HEK293 (cell line): ENCODE measurements at regions of chr6 and their contacts with region 1.

Region 1: DNA sequence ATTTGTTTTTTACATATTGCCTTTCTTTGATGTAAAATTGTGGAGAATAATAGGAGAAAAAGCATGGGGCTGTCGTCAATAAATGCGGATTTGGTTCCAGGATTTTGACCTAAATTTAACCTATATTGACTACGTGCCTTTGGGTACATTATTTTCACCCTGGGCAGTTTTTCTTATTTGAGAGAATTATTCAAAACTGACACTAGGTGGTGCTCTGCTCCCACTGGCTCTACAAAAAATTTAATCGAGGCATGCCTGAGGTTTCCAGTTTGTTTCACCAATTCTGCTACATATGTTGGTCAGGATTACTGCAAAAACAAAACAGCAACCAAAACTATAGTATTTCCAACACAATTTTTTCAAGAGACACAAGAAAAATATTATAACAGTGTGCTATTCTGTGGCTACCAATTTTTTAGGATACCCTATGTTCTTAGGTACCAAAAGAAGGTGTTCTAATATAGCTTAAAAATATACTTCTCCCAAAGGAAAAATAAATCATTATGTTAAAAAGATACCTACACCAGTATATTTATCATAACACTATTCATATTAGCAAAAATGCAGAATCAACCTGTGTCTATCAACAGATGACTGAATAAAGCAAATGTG is 48.6 kb upstream of the FABP7 start:
- H3K4me3 ChIP-seq: no peak overlapping the region
- H3K27ac ChIP-seq: no peak overlapping the region
- H3K4me1 ChIP-seq: no peaks in the 10 kb centered on the region
- CTCF ChIP-seq: peak; percentile 44; the same call in 1 of the 2 replicates

Region 2: DNA sequence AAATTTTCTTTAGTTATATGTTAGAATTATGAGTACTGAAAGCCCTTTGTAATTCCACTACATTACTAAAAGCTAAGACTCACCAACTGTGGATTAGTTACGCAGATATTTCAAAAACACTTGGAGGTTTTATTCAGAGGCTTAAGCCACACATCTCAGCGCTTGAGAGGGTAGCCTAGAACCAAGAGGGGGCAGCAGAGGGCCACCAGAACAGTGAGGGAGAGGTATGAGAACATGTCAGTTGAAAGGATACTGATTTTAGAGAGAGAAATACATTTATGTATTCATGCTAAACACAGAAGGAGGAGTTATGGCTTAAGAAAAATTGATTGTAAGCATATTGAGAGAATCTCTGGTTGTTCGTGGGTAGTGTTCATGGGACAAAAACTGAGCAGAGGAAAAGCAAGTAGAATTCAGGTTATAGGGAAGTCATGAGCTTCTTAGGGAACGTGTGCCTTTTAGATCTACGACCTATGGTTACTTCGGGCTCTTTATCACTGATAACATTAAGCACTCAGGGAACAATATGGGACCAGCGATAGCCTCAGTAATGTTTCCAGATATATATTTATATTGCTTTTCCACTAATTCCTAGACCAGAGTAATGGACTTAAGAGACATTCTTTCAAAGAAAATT is 238.8 kb before region 1 on chr6:
- CTCF ChIA-PET with region 1: interaction called, 136 read pairs
- POLR2A ChIA-PET with region 1: no interaction called
- H3K4me3 ChIP-seq: no peak overlapping the region
- H3K27ac ChIP-seq: no peak overlapping the region
- H3K4me1 ChIP-seq: no peaks in the 10 kb centered on the region
- CTCF ChIP-seq: peak; percentile 53

Region 3: DNA sequence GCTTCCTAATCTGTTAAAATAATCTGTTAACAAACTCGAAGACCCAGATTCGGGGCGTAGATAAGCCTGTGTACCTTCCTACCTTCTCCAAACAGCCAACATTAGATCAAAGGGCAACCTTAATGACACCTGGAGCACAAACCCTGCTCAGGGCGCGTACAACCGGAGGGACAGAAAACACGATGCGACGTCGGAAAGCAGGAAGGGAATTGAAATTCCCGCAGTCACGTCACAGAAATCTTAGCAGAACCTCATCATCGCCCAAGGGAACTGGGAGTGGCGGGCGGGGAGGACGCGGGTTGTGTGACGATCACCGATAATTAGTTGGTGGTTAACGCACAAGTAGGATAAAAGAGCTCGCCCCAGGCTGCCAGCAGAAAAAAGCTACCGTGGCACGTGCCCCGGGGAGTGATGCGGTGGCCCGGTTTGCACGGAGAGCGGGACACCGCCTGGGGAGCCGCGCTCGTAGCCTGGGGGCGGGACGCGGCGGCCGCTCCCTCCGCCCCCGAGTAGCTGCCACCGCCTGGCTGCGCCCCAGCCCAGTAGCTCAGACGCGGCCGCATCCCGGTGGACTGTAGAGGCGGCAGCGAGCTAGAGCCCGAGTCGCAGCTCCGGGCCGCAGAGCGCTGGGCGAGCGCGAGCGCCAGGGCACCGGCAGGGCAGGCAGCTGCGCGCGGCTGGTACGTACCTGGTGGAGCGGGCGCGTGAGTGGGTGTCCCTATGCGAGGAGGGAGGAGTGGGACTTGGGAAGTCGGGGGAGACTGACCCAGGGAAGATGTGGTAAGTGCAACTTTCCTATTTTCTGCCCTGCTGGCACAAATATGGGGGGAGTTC is 120.8 kb before region 1 on chr6 and contains the start of gene PKIB:
- CTCF ChIA-PET with region 1: interaction called, 16 read pairs
- POLR2A ChIA-PET with region 1: no interaction called
- H3K4me3 ChIP-seq: peak within 1 kb of the TSS; percentile 77
- H3K27ac ChIP-seq: peak within 1 kb of the TSS; percentile 57; the same call in 1 of the 2 replicates
- H3K4me1 ChIP-seq: no peaks in the 10 kb centered on the region
- CTCF ChIP-seq: peak; percentile 81; the same call in 1 of the 2 replicates

Region 4: GRCh38 chr6:122717350-122717749 is 13.5 kb before region 1 on chr6:
- CTCF ChIA-PET with region 1: interaction called, 22 read pairs
- POLR2A ChIA-PET with region 1: no interaction called
- H3K4me3 ChIP-seq: no peak overlapping the region
- H3K27ac ChIP-seq: no peak overlapping the region
- H3K4me1 ChIP-seq: no peaks in the 10 kb centered on the region
- CTCF ChIP-seq: no peak

Region 5: DNA sequence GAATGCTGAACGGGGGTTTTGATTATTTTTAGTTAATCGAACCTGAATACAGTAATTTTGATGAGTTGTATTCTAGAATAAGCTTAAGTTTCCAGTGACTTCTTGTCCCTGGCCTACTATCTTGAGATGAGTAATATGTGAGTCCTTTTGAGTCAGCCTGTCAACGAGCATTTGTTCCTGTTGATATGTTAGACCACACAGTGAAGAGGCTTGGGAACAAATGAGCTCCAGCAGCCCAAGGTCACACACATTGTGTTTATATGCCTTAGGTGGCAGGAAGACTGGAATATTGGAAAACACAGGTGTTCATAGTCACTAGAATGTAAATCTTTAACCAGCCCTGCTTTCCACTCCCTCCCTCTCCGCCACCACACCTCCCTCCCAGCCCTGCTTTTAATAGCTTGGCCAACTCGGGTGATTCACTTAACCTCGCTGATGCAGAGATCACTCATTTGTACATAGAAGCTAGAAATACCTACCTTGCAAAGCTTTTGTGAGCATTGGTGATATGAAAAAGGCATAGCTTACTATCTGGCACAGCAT is 67.3 kb after region 1 on chr6:
- CTCF ChIA-PET with region 1: interaction called, 21 read pairs
- POLR2A ChIA-PET with region 1: interaction called, 3 read pairs
- H3K4me3 ChIP-seq: no peak overlapping the region
- H3K27ac ChIP-seq: no peak overlapping the region
- H3K4me1 ChIP-seq: peaks cover 3% of the 10 kb centered on the region; the same call in 1 of the 2 replicates
- CTCF ChIP-seq: no peak